ENCODE measurements at regions of chr18 and their contacts with region 1.

Region 1: GRCh38 chr18:31741097-31741735 is 19.5 kb downstream of the SLC25A52 start:
- DNase-seq: peak; percentile 78
- H3K4me3 Mint-ChIP-seq: no peak overlapping the region
- H3K27ac Mint-ChIP-seq: no peak overlapping the region
- H3K4me1 Mint-ChIP-seq: no peaks in the 10 kb centered on the region
- H3K27me3 Mint-ChIP-seq: no peaks in the 10 kb centered on the region

Region 2: GRCh38 chr18:31325051-31325450 is 416.2 kb before region 1 on chr18:
- CTCF ChIA-PET with region 1: no interaction called
- intact Hi-C with region 1: no loop called
- DNase-seq: no peak
- H3K4me3 Mint-ChIP-seq: no peak overlapping the region
- H3K27ac Mint-ChIP-seq: no peak overlapping the region
- H3K4me1 Mint-ChIP-seq: no peaks in the 10 kb centered on the region
- H3K27me3 Mint-ChIP-seq: peaks cover 3% of the 10 kb centered on the region

Region 3: GRCh38 chr18:31546476-31546875 is 194.7 kb before region 1 on chr18:
- CTCF ChIA-PET with region 1: no interaction called
- intact Hi-C with region 1: no loop called
- DNase-seq: no peak
- H3K4me3 Mint-ChIP-seq: no peak overlapping the region
- H3K27ac Mint-ChIP-seq: no peak overlapping the region
- H3K4me1 Mint-ChIP-seq: no peaks in the 10 kb centered on the region
- H3K27me3 Mint-ChIP-seq: no peaks in the 10 kb centered on the region

Region 4: GRCh38 chr18:31957728-31958127 is 216.5 kb after region 1 on chr18:
- CTCF ChIA-PET with region 1: no interaction called
- intact Hi-C with region 1: loop called (anchors 1 kb)
- DNase-seq: no peak
- H3K4me3 Mint-ChIP-seq: no peak overlapping the region
- H3K27ac Mint-ChIP-seq: no peak overlapping the region
- H3K4me1 Mint-ChIP-seq: no peaks in the 10 kb centered on the region
- H3K27me3 Mint-ChIP-seq: no peaks in the 10 kb centered on the region

Region 5: DNA sequence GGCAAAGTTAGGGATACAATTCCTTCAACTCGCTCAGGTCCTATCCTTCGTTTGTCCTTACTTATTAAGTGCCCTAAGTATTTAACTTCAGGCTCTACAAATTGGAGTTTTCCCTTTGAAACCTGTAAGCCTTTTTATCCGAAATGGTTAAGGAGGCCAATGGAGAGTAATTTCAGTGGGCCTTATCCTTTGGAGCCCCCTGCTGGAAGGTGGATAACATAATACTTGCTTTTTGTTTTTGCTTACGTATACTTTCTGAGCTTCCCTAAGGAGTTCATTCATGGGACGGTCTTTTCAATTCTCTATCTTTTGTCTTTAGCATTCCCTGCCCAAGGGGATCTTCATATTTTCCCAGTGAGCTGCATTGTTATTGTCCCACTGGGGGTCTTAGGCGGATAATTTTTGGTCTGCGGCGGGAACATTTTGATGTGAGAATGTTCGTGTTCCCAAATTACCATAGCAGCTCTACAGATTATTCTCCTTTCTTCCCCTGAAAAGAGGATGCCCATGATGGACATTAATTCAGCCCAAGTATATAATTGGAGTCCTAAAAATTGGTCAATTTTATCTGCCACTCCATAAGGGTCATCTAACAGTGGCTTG is 236.2 kb after region 1 on chr18:
- CTCF ChIA-PET with region 1: interaction called, 4 read pairs
- intact Hi-C with region 1: loop called (anchors 1 kb)
- DNase-seq: peak; percentile 31
- H3K4me3 Mint-ChIP-seq: no peak overlapping the region
- H3K27ac Mint-ChIP-seq: no peak overlapping the region
- H3K4me1 Mint-ChIP-seq: no peaks in the 10 kb centered on the region
- H3K27me3 Mint-ChIP-seq: no peaks in the 10 kb centered on the region

Region 6: DNA sequence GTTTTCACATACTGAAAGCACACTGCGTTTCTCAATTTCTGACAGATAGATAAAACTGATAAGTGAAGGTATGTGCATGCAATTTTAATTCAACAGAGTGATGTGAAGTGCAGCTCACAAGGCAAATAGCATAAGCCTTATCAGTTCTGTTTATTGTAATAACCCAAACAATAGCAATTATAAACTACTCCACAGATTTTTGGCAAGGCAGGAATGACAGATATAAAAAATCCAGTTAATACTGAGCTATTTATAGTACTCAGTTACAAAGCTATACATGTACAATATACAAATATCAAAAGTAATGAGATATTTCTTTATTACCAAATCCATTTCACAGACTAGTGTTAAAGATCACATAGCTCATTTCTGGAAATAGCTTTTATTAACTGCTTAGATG is 1242.5 kb after region 1 on chr18:
- CTCF ChIA-PET with region 1: no interaction called
- intact Hi-C with region 1: no loop called
- DNase-seq: no peak
- H3K4me3 Mint-ChIP-seq: no peak overlapping the region
- H3K27ac Mint-ChIP-seq: no peak overlapping the region
- H3K4me1 Mint-ChIP-seq: no peaks in the 10 kb centered on the region
- H3K27me3 Mint-ChIP-seq: no peaks in the 10 kb centered on the region